ENCODE measurements at regions of chr2 and their contacts with region 1.

Region 1: DNA sequence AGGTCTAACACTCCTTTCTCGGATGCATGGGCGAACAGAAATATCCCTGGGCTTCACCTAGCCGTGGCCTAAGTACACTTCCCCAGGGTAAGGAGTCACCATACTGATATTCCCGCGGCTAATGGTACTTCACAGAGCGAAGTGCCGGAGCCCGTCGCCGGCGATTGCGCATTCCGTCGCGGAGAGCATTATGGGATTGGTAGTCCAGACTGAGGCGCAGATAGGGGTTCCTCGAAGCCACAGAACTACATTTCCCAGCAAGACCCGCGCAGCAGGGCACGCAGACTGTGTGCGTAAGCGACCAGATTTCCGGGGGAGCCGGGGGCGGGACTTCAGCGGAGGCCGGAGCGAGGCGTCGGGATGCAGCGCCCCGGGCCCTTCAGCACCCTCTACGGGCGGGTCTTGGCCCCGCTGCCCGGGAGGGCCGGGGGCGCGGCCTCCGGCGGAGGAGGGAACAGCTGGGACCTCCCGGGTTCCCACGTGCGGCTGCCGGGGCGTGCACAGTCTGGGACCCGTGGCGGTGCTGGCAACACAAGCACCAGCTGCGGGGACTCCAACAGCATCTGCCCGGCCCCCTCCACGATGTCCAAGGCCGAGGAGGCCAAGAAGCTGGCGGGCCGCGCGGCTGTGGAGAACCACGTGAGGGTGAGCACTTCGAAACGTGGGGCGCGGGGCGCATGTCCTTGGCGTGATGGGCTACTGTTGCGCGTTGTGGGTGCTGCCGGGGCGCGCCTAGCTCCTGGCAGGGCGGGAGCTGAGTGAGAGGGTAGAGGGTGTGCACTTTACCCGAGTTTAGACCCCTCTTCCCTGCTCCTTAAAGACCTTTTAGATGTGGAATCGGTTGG is at the start of gene RPIA:
- DNase-seq: peak; percentile 98
- H3K4me3 ChIP-seq: peak within 1 kb of the TSS; percentile 85 to 96 (median 96)
- H3K27ac ChIP-seq: peak within 1 kb of the TSS; percentile 57
- H3K4me1 ChIP-seq: peaks cover 19% of the 10 kb centered on the region
- H3K27me3 ChIP-seq: no peaks in the 10 kb centered on the region
- CTCF ChIP-seq: peak; percentile 6 to 46
- total RNA-seq, gene RPIA: 5.8 to 11.4 TPM

Region 2: GRCh38 chr2:88408528-88409269 is 282.9 kb before region 1 on chr2:
- CTCF ChIA-PET with region 1: no interaction called
- dilution Hi-C with region 1: no loop called
- in situ Hi-C with region 1: no loop called
- intact Hi-C with region 1: no loop called
- DNase-seq: peak; percentile 6
- H3K4me3 ChIP-seq: no peak overlapping the region
- H3K27ac ChIP-seq: no peak overlapping the region
- H3K4me1 ChIP-seq: no peaks in the 10 kb centered on the region
- H3K27me3 ChIP-seq: peaks cover 2% of the 10 kb centered on the region
- CTCF ChIP-seq: no peak

Region 3: GRCh38 chr2:88500695-88501094 is 190.9 kb before region 1 on chr2:
- CTCF ChIA-PET with region 1: no interaction called
- dilution Hi-C with region 1: no loop called
- in situ Hi-C with region 1: no loop called
- intact Hi-C with region 1: loop called (anchors 5 kb)
- DNase-seq: peak; percentile 84
- H3K4me3 ChIP-seq: no peak overlapping the region
- H3K27ac ChIP-seq: peak overlapping the region; percentile 80
- H3K4me1 ChIP-seq: peaks cover 40% of the 10 kb centered on the region
- H3K27me3 ChIP-seq: no peaks in the 10 kb centered on the region
- CTCF ChIP-seq: no peak

Region 4: DNA sequence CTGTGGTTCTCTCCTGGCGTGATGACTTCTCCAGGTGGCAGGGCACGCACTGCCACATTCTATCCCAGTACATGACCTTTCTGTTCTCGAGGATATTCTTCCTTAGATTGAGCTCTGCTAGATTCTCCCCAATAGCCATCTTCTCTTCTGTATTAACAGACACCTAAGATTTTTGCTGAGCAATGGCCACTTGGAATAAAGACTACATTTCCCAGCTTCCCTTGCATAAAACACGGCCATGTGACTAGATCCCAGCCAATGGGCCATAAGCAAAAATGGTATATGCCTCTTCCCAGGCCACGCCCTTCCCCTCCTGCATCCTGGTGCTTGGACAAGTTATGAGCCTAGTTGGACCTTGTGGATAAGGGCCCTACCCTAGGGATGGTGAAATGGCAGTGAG is 146.4 kb before region 1 on chr2:
- CTCF ChIA-PET with region 1: no interaction called
- dilution Hi-C with region 1: no loop called
- in situ Hi-C with region 1: no loop called
- intact Hi-C with region 1: no loop called
- DNase-seq: peak; percentile 38
- H3K4me3 ChIP-seq: no peak overlapping the region
- H3K27ac ChIP-seq: no peak overlapping the region
- H3K4me1 ChIP-seq: peaks cover 6% of the 10 kb centered on the region
- H3K27me3 ChIP-seq: no peaks in the 10 kb centered on the region
- CTCF ChIP-seq: no peak

Region 5: GRCh38 chr2:88651660-88652059 is 39.9 kb before region 1 on chr2:
- CTCF ChIA-PET with region 1: no interaction called
- dilution Hi-C with region 1: no loop called
- in situ Hi-C with region 1: no loop called
- intact Hi-C with region 1: no loop called
- DNase-seq: no peak
- H3K4me3 ChIP-seq: no peak overlapping the region
- H3K27ac ChIP-seq: no peak overlapping the region
- H3K4me1 ChIP-seq: no peaks in the 10 kb centered on the region
- H3K27me3 ChIP-seq: no peaks in the 10 kb centered on the region
- CTCF ChIP-seq: no peak

Region 6: DNA sequence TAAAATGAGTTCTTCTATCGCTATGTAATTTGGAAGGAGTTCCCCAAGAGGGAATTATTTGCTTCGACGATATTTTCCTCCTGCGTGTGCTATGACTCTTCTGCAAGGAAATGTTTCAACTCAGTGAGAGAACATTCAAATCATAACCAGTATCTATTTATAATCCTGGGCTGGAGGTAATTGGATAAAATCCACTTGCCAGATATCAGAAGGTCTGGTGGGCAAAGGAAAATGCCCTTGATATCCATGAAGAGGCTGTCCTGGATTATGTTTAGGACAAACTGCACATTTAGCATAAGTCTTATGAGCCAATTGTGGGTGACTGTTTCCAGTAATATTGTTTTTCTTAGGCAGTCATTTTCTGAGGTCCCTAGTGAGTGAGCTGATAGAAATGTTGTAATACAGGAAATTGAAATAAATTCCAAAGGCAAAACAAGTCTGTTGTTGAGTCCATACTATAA is 17.6 kb after region 1 on chr2:
- CTCF ChIA-PET with region 1: no interaction called
- dilution Hi-C with region 1: no loop called
- in situ Hi-C with region 1: no loop called
- intact Hi-C with region 1: loop called (anchors 2 kb)
- DNase-seq: peak; percentile 62
- H3K4me3 ChIP-seq: no peak overlapping the region
- H3K27ac ChIP-seq: no peak overlapping the region
- H3K4me1 ChIP-seq: peaks cover 12% of the 10 kb centered on the region
- H3K27me3 ChIP-seq: no peaks in the 10 kb centered on the region
- CTCF ChIP-seq: no peak